H1 (cell line): ENCODE measurements at regions of chrX and their contacts with region 1.

Region 1: GRCh38 chrX:101390664-101391525 is at the start of gene RPL36A:
- DNase-seq: peak; percentile 70 to 80
- H3K4me3 ChIP-seq: peak within 1 kb of the TSS; percentile 58 to 91 (median 86)
- H3K27ac ChIP-seq: peak within 1 kb of the TSS; percentile 88
- H3K4me1 ChIP-seq: no peaks in the 10 kb centered on the region; a peak in 1 of 7 replicates
- H3K27me3 ChIP-seq: no peaks in the 10 kb centered on the region
- CTCF ChIP-seq: peak; percentile 61 to 76 (median 64)
- EP300 ChIP-seq: no peak
- POLR2A ChIP-seq: peak; percentile 97 to 98
- RAD21 ChIP-seq: no peak; a peak in 1 of 4 replicates
- total RNA-seq, gene RPL36A: 271 and 309 TPM in 2 replicates

Region 2: GRCh38 chrX:101348452-101349192 is 42.3 kb before region 1 on chrX and contains the start of gene TIMM8A:
- CTCF ChIA-PET with region 1: no interaction called
- POLR2A ChIA-PET with region 1: interaction called, 45 read pairs
- DNase-seq: peak; percentile 9 to 72
- H3K4me3 ChIP-seq: peak within 1 kb of the TSS; percentile 57 to 88 (median 74)
- H3K27ac ChIP-seq: peak within 1 kb of the TSS; percentile 89
- H3K4me1 ChIP-seq: no peaks in the 10 kb centered on the region
- H3K27me3 ChIP-seq: no peaks in the 10 kb centered on the region
- CTCF ChIP-seq: no peak
- EP300 ChIP-seq: no peak
- POLR2A ChIP-seq: peak; percentile 52 to 74
- RAD21 ChIP-seq: no peak
- total RNA-seq, gene TIMM8A: 38.0 and 38.1 TPM in 2 replicates

Region 3: GRCh38 chrX:101368800-101369199 is 22.1 kb before region 1 on chrX:
- CTCF ChIA-PET with region 1: interaction called, 6 read pairs
- POLR2A ChIA-PET with region 1: interaction called, 27 read pairs
- DNase-seq: no peak
- H3K4me3 ChIP-seq: no peak overlapping the region
- H3K27ac ChIP-seq: no peak overlapping the region
- H3K4me1 ChIP-seq: no peaks in the 10 kb centered on the region
- H3K27me3 ChIP-seq: no peaks in the 10 kb centered on the region
- CTCF ChIP-seq: no peak
- EP300 ChIP-seq: no peak
- POLR2A ChIP-seq: no peak
- RAD21 ChIP-seq: no peak

Region 4: DNA sequence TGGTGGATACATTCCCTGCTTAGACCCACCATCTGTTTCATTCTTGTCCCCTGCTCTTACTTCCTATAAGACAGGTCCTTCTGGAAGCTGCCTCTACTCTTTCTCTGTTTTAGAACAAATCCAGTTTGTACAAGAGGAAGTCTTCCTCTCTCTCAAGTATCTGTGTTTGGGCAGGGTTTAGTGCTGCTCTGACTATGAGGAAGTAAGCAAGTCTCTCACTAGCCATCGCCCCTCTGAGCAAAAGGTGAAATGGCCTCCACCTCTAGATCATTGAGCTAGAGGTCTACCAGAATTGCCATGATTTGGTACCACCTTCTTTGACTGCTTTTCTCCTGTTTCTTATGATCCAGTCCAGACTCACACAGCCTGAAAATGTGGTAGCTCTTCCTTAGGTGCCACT is 13.3 kb before region 1 on chrX:
- CTCF ChIA-PET with region 1: interaction called, 10 read pairs
- POLR2A ChIA-PET with region 1: interaction called, 27 read pairs
- DNase-seq: no peak
- H3K4me3 ChIP-seq: no peak overlapping the region
- H3K27ac ChIP-seq: no peak overlapping the region
- H3K4me1 ChIP-seq: no peaks in the 10 kb centered on the region
- H3K27me3 ChIP-seq: no peaks in the 10 kb centered on the region
- CTCF ChIP-seq: no peak
- EP300 ChIP-seq: no peak
- POLR2A ChIP-seq: no peak
- RAD21 ChIP-seq: no peak

Region 5: DNA sequence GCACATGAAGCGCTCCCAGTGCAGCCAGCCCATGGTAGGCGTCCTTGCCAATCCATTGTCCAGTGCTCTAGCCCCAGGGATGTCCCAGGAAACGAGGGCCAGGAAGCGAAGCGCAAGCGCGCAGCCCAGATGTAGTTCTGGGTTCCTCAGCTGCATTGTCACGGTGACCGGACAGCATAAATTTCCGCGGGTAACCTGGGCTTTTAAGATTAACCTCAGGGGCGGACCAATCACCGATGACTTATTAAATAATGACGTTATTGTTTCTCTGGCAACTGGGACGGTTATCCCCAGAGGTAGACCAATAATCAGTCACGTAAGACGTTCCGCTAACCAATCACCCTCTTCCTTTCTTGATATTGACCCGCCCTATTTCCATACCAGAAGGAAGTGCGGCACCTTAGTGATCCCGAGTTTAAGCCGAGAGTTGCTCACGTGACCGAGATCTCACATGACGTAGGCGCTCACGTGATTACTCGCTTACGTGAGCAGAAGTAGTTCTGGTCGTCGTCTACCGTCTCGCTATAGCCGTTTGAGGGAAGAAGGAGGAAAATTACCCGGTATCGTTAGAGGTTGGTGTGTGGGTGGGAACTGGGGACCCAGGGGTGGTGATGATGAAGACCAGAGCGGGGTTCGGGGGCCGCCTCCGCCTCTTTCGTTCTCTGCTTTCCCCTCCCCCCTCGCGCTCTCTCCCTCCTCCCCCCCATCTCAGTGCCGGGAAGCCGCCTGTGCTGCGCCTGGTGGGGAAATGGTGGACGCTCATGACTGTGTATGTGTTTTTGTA is 17.0 kb after region 1 on chrX and contains the starts of genes GLA and HNRNPH2:
- CTCF ChIA-PET with region 1: interaction called, 7 read pairs
- POLR2A ChIA-PET with region 1: interaction called, 44 read pairs
- DNase-seq: peak; percentile 77 to 80
- H3K4me3 ChIP-seq: peak within 1 kb of the TSS; percentile 87 to 98 (median 92)
- H3K27ac ChIP-seq: peak within 1 kb of the TSS; percentile 98
- H3K4me1 ChIP-seq: no peaks in the 10 kb centered on the region; a peak in 1 of 7 replicates
- H3K27me3 ChIP-seq: no peaks in the 10 kb centered on the region
- CTCF ChIP-seq: no peak
- EP300 ChIP-seq: no peak
- POLR2A ChIP-seq: peak; percentile 88 to 91
- RAD21 ChIP-seq: no peak
- total RNA-seq, gene GLA: 39.2 and 47.3 TPM in 2 replicates
- total RNA-seq, gene HNRNPH2: 62.6 and 66.7 TPM in 2 replicates

Region 6: DNA sequence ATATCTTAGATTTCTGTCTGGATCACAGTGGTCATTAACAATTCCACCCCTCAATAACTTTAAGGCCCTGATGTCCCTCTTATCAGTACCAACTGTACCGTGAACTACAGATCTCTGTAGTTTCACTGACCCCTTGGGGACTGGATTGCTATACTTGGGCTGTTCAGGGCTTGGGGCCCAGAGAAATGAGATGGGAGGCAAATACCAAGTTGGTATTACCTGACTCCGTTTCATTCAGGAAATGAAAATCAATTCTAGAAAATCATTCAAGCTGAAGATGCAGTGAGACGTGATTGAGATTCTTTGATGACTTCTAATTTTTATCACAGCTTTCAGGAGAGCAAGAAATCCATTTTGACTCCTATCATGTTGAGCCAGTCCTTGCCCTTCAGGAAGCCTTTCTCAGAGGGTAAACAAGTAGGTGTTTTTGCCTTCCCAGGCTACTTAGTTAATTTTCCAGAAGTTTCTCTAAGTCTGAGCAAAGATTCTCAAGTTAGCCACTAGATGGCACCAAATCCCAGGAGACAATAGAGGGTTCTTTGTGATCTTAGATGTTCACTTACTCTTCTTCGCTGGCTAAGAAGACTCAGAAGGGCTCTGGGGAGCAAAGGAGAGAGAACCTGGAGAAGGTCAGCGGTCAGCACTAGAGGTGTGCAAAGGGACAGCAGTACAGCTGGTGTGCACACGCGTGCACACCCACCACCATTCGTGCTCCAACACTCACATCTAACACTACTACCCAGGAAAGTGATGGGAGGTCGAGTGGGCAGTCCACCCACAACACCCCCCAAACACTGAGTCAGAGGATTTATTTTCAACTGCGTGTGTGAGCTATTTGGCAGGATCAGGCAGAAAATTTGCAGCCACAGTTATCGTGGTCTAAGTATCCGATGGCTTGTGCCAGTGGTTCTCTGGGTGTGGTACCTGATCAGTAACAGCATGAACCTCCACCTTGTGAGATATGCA is 24.6 kb after region 1 on chrX:
- CTCF ChIA-PET with region 1: no interaction called
- POLR2A ChIA-PET with region 1: interaction called, 36 read pairs
- DNase-seq: no peak
- H3K4me3 ChIP-seq: no peak overlapping the region
- H3K27ac ChIP-seq: no peak overlapping the region
- H3K4me1 ChIP-seq: peaks cover 0 to 3% (median 1%) of the 10 kb centered on the region in 4 experiments; a peak in 3 of 7 replicates
- H3K27me3 ChIP-seq: no peaks in the 10 kb centered on the region
- CTCF ChIP-seq: peak in 2 of 3 experiments; percentile 44 to 47; a peak in 2 of 4 replicates
- EP300 ChIP-seq: no peak
- POLR2A ChIP-seq: no peak
- RAD21 ChIP-seq: peak; percentile 65 to 75